Endothelial cell of umbilical vein (primary cell): ENCODE measurements at regions of chr16 and their contacts with region 1.

Region 1: GRCh38 chr16:68040507-68041288 is 17.6 kb downstream of the DUS2 start:
- DNase-seq: peak; percentile 75
- H3K4me3 ChIP-seq: no peak overlapping the region
- H3K27ac ChIP-seq: no peak overlapping the region
- H3K4me1 ChIP-seq: no peaks in the 10 kb centered on the region
- H3K27me3 ChIP-seq: no peaks in the 10 kb centered on the region
- CTCF ChIP-seq: peak; percentile 79 to 88
- POLR2A ChIP-seq: no peak

Region 2: DNA sequence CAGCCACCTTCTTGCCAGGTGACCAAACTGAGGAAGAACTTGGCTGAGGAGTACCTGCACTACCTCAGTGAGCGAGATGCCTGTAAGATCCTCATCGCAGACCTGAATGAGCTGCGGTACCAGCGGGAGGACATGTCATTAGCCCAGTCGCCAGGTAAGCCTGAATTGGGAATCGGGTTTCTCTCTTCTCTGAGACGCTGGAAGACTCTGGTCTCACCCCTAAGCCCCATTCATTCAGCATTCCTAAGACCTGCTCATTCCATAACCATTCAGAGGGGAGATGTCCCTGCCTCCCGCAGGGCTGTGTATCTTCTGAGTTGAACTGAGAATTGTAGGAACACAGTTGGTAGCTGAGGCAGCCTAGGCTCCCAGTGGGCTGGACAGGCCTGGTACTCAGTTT is 215.6 kb before region 1 on chr16:
- CTCF ChIA-PET with region 1: no interaction called
- POLR2A ChIA-PET with region 1: no interaction called
- dilution Hi-C with region 1: no loop called
- intact Hi-C with region 1: no loop called
- DNase-seq: no peak
- H3K4me3 ChIP-seq: no peak overlapping the region
- H3K27ac ChIP-seq: no peak overlapping the region
- H3K4me1 ChIP-seq: no peaks in the 10 kb centered on the region
- H3K27me3 ChIP-seq: no peaks in the 10 kb centered on the region
- CTCF ChIP-seq: no peak
- POLR2A ChIP-seq: no peak

Region 3: GRCh38 chr16:67935402-67936123 is 105.1 kb before region 1 on chr16:
- CTCF ChIA-PET with region 1: interaction called, 19 read pairs
- POLR2A ChIA-PET with region 1: no interaction called
- dilution Hi-C with region 1: no loop called
- intact Hi-C with region 1: loop called (anchors 2 kb)
- DNase-seq: peak; percentile 91
- H3K4me3 ChIP-seq: peak overlapping the region; percentile 31 to 88 (median 58)
- H3K27ac ChIP-seq: peak overlapping the region; percentile 36
- H3K4me1 ChIP-seq: peaks cover 13% of the 10 kb centered on the region
- H3K27me3 ChIP-seq: no peaks in the 10 kb centered on the region
- CTCF ChIP-seq: no peak
- POLR2A ChIP-seq: peak; percentile 71

Region 4: DNA sequence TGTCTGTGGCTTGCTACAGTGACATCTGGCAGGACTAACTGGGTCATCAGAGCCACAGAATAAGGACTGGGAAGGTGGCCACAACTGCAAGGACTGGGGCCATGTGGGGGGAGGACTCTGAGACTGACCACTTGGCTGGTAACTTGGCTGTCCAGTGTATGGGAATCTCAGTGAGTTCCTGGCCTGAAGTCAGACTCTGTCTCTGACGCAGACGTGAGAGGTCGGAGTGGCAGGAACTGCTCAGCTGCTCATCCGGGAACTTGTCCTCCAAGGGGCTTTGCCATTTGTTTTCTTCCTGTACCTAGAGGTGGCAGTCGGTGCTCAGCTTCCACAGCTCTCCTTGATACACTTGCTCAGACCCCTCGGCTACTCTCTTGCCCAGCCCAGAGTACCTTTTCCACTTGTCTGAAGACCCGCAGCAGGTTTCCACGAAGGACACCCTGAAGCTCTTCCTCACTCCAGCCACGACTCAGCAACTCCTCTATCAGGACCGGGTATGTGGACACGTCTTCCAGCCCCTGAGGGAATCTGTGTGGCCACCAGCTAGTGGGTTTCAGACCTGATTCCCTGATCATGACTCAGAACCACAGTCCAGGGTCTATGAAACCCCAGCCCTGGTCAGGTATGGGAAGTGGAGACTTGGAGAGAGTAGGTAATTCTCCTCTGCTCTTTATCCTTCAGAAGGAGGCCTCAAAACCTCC is 53.1 kb before region 1 on chr16:
- CTCF ChIA-PET with region 1: interaction called, 52 read pairs
- POLR2A ChIA-PET with region 1: no interaction called
- dilution Hi-C with region 1: no loop called
- intact Hi-C with region 1: no loop called
- DNase-seq: peak; percentile 33
- H3K4me3 ChIP-seq: no peak overlapping the region
- H3K27ac ChIP-seq: no peak overlapping the region
- H3K4me1 ChIP-seq: peaks cover 17% of the 10 kb centered on the region
- H3K27me3 ChIP-seq: no peaks in the 10 kb centered on the region
- CTCF ChIP-seq: no peak
- POLR2A ChIP-seq: no peak

Region 5: DNA sequence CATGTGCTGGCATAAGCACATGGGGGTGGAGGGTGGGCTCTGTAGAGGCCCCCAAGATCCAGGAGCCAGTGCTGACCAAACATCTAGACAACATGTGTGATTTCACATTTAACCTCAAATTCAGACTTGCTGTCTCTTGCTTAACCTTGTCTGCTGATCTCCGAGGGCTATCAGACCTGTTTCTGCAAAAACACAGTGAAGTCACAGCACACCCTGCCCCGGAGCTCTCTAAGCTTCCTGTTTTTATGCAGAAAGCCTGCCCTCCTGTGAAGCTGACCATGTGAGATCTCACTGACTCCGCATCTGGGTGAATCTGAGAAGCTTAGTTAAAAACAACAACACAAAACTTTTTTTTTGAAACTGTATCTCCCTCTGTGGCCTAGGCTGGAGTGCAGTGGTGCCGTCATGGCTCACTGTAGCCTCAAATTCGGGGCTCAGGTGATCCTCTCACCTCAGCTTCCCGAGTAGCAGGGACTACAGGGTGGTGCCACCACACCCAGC is 34.9 kb before region 1 on chr16:
- CTCF ChIA-PET with region 1: interaction called, 22 read pairs
- POLR2A ChIA-PET with region 1: no interaction called
- dilution Hi-C with region 1: no loop called
- intact Hi-C with region 1: no loop called
- DNase-seq: peak; percentile 92
- H3K4me3 ChIP-seq: no peak overlapping the region
- H3K27ac ChIP-seq: no peak overlapping the region
- H3K4me1 ChIP-seq: peaks cover 3% of the 10 kb centered on the region
- H3K27me3 ChIP-seq: no peaks in the 10 kb centered on the region
- CTCF ChIP-seq: no peak
- POLR2A ChIP-seq: no peak

Region 6: DNA sequence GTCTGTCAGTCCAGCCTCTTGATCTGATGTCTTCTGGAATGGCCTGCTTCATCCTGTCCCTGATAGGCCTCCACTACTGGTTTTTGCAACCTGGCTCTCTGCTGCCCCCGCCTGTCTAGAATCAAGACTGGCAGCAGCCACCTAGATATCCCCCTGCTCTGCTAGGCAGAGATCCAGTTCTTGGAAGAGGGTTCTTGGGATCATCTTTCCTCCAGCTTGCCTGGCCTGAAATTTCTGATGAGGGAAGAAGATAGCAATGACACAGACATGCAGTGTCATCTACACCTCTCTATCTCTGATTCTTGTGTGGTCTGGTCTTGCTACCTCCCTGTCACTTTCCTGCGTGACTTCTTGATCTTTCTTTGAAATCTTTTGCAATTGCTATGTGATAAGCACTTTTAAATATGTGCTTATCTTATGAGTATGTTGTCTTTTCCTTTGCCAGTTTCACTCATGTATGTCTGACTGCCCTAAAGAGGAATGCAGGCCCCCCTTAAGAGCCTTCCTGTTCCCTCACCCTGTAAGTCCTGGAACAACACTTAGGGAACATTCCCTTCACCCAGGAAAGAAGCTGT is 24.2 kb after region 1 on chr16:
- CTCF ChIA-PET with region 1: interaction called, 12 read pairs
- POLR2A ChIA-PET with region 1: no interaction called
- dilution Hi-C with region 1: no loop called
- intact Hi-C with region 1: no loop called
- DNase-seq: peak; percentile 77
- H3K4me3 ChIP-seq: no peak overlapping the region
- H3K27ac ChIP-seq: no peak overlapping the region
- H3K4me1 ChIP-seq: peaks cover 19% of the 10 kb centered on the region
- H3K27me3 ChIP-seq: no peaks in the 10 kb centered on the region
- CTCF ChIP-seq: peak; percentile 80 to 83
- POLR2A ChIP-seq: no peak

Region 7: GRCh38 chr16:68275611-68276191 is 235.0 kb after region 1 on chr16:
- CTCF ChIA-PET with region 1: no interaction called
- POLR2A ChIA-PET with region 1: no interaction called
- dilution Hi-C with region 1: no loop called
- intact Hi-C with region 1: no loop called
- DNase-seq: no peak
- H3K4me3 ChIP-seq: no peak overlapping the region
- H3K27ac ChIP-seq: no peak overlapping the region
- H3K4me1 ChIP-seq: no peaks in the 10 kb centered on the region
- H3K27me3 ChIP-seq: no peaks in the 10 kb centered on the region
- CTCF ChIP-seq: no peak
- POLR2A ChIP-seq: no peak

Region 8: GRCh38 chr16:68310761-68311511 is 270.2 kb after region 1 on chr16 and contains the starts of genes PRMT7 and SLC7A6OS:
- CTCF ChIA-PET with region 1: no interaction called
- POLR2A ChIA-PET with region 1: no interaction called
- dilution Hi-C with region 1: no loop called
- intact Hi-C with region 1: no loop called
- DNase-seq: peak; percentile 95
- H3K4me3 ChIP-seq: peak within 1 kb of the TSS; percentile 80 to 84 (median 83)
- H3K27ac ChIP-seq: peak within 1 kb of the TSS; percentile 58
- H3K4me1 ChIP-seq: peaks cover 20% of the 10 kb centered on the region
- H3K27me3 ChIP-seq: no peaks in the 10 kb centered on the region
- CTCF ChIP-seq: no peak
- POLR2A ChIP-seq: peak; percentile 96
- total RNA-seq, gene PRMT7: 33.8 and 43.4 TPM in 2 replicates
- total RNA-seq, gene SLC7A6OS: 22.0 and 22.9 TPM in 2 replicates